Activated T-helper 2 cell treated with anti-CD3 and anti-CD28 coated beads, Interferon-gamma antibody, Interleukin-2, Interleukin-4, amounts not matched to agents 10 μg/mL and 5 μg/mL and 100 μg/mL, durations not matched to agents 14 hours and 24 hours and 36 hours (primary cell): ENCODE measurements at regions of chr19 and their contacts with region 1.

Region 1: DNA sequence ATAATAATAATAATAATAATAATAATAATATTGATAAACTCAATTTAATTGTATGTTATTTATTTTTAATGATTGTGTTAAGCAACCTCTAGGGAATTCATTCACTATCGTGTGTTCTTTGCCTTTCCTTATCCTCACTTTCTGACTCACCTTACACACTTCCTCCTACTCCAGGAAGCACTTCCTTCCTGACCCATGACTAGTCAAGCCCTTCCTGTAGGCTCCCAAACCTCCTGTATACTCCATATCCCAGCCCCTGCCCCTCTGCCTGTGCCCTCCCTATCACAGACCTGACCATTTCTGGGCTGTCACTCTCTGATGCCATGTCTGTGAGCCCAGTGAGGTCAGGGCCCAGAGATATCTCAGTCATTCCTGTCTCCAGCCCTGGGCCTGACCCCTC is 7.6 kb downstream of the LGALS4 start:
- DNase-seq: no peak
- H3K4me3 Mint-ChIP-seq: no peak overlapping the region
- H3K27ac Mint-ChIP-seq: no peak overlapping the region
- H3K4me1 Mint-ChIP-seq: peaks cover 2% of the 10 kb centered on the region
- H3K27me3 Mint-ChIP-seq: no peaks in the 10 kb centered on the region

Region 2: DNA sequence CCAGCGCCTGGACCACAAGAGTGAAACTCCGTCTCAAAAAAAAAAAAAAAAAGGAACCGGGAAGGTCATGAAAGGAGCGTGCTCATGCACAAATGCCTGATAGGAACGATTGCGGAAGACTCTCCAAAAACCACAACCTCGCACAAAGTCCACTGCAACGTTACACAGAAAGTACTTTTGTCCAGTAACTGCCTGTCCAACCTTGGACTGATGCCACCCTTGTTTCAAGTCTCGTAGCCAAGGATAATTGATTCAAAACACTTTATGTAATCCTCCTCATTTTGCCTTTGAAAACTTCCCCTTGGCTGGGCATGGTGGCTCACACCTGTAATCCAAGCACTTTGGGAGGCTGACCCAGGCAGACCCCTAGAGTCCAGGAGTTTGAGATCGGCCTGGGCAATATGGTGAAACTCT is 45.6 kb before region 1 on chr19:
- intact Hi-C with region 1: loop called (anchors 10 kb)
- DNase-seq: no peak
- H3K4me3 Mint-ChIP-seq: no peak overlapping the region
- H3K27ac Mint-ChIP-seq: no peak overlapping the region
- H3K4me1 Mint-ChIP-seq: no peaks in the 10 kb centered on the region
- H3K27me3 Mint-ChIP-seq: no peaks in the 10 kb centered on the region